Gastrocnemius medialis (tissue), 4 donors: ENCODE measurements at regions of chr13 and their contacts with region 1.

Region 1: DNA sequence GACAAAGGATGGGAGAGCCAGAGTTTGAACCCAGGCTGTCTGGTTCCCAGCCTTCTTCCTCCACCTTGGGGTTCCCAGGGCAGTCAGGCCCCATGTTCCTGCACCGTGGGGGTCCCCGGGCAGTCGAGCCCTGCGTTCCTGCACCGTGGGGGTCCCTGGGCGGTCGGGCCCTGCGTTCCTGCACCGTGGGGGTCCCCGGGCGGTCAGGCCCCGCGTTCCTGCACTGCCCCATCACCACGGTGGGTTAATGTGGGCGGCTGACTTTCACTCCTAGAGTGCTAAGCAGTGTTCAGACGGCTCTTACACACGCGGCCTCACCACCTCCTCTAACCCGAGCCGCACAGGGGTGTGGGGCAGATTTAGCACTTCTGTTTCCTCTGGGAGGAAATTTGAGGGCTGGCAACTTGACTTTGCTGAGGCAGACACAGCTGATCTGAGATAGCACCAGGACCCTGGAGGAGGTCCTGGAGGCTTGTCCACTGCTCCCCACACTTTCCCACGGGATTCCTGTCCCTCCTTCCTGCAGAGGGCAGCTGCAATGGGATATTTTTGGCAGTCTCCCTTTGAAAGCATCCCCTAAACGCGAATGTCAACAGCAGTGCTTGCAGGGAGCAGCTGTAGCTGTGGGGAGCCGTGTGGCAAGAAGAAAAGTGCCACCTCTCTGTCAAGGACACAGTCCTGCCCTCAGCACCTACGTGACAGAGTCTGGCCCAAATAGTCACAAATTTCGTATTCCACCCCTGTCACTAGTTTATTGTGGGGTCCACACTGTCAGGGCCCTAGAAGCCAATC is 239.4 kb downstream of the TEX29 start:
- DNase-seq: no peak
- ATAC-seq: no peak
- H3K4me3 ChIP-seq: no peak overlapping the region
- H3K27ac ChIP-seq: no peak overlapping the region
- H3K4me1 ChIP-seq: no peaks in the 10 kb centered on the region
- H3K27me3 ChIP-seq: peaks cover 0 to 7% (median 3%) of the 10 kb centered on the region in 3 donors
- CTCF ChIP-seq: no peak
- POLR2A ChIP-seq: no peak

Region 2: DNA sequence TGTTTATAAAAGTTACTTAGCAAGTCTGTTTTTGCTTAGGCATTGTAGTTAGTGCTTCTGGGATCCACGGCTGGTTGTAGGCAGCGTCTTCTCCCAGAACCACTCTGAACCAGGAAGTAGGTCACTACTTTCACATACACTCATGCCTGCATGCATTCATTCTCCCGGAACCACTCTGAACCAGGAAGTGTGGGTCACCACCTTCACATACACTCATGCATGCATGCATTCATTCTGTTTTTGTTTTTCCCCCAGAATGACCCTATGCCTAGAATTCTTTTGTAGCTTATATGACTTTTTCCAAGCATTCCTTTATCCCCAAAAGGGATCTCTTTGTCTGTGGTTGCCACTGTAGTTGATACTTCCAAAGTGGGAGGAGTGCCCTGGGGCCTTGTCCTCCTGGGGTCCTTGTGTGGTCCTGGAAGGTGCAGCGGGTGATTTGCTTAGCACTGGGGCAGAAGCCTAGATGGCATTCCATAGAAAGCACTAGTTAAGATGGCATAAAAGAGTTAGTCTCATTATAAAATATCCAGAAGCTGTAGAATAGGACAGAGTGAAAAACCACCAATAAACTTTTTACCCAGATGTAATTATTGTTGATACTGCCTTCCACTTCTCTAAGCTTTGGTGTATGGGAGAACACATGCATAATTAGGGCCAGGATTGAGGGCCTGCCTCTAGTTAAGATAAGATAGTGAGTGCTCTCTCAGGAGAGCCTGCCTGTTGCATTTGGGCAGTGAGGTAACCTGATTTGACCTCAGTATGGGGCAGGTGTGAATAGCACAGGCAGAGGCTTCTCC is 308.0 kb before region 1 on chr13:
- in situ Hi-C with region 1: no loop called
- intact Hi-C with region 1: no loop called
- DNase-seq: no peak
- ATAC-seq: no peak
- H3K4me3 ChIP-seq: no peak overlapping the region
- H3K27ac ChIP-seq: peak overlapping the region; percentile 57 to 86 (median 68)
- H3K4me1 ChIP-seq: peaks cover 72 to 87% of the 10 kb centered on the region in 2 donors
- H3K27me3 ChIP-seq: no peaks in the 10 kb centered on the region
- CTCF ChIP-seq: no peak
- POLR2A ChIP-seq: no peak

Region 3: DNA sequence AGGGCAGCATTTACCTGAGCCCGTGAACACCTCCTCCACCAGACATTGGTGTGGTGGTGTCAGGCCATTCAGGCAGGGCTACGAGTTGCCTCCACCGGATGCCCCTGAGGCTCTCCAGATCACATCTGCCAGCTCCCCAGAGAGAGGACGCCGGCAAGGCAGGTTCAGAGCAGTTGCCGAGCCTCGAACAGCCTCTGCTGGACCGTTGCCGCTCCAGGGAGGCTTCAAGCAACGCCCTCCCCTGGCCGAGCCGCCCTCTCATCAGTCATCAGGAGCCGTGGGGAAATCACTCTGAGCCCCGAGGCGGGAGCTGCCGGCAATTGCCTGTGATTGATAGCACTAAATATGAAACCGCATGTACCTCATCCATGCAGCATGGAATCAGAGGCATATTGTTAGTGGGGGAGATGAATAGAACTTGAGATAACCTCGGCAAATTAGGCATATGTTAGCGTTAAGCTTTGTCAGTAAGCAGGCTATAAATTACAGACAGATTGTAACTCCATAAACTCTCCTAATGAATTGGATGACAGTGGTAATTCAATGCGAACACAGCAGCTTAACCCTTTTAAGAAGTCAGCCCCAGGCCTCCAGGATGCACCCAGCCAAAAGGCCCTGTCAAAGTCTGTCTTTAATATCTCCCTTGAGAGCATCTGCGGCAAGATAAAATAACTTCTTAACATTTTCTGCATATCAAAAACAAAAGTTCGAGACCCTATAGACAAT is 786.5 kb after region 1 on chr13:
- in situ Hi-C with region 1: no loop called
- intact Hi-C with region 1: loop called (anchors 10 kb)
- DNase-seq: no peak
- ATAC-seq: no peak
- H3K4me3 ChIP-seq: no peak overlapping the region
- H3K27ac ChIP-seq: no peak overlapping the region
- H3K4me1 ChIP-seq: no peaks in the 10 kb centered on the region
- H3K27me3 ChIP-seq: peaks cover 23 to 36% (median 27%) of the 10 kb centered on the region in 3 donors
- CTCF ChIP-seq: no peak
- POLR2A ChIP-seq: no peak